ENCODE measurements at regions of chr3 and their contacts with region 1.

Region 1: DNA sequence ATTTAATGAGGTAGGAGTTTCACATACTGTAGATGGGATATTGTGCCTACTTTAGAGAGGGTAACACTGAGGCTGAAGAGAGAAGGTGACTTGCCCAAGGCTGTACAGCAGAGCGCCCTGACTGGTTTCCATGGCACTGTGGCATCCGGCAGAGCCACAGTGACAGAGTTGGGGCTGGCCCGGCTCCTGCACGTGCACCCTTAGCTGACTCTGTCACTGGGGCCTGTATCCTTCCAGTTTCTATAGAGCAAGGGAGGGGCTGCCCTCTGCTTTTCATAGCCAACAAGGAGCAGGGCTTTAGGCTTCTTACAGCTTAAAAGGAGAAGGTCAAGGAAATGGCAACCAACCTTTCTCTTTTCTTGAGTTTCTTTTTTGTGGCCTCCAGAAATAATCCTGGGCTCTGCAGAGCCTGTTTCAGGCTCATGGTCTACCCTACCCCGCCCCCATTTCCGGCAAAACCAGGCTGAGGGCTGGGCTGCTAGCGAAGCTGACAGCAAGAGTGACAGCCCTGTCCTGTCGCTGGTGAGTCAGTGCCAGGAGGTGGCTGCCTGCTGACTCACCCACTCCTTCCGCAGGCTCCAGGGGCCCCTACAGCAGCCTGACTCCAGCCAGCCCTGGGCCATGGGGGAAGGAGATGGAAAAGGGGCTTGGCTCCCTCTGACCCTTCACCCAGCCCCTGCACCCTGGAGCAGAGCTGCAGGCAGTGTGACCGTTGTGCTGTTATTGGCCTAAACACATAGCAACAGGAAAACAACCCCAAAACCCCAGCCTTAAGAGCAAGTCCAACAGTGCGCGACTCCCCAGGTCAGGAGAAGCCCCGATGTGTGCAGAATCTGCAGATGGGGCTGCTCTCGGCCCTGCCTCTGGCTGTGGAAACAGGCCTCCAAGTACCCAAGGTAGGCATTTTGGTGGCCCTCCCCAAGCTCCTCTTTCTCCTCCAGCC is 29.8 kb downstream of the SLC6A6 start:
- DNase-seq: peak; percentile 89 to 94
- ATAC-seq: peak; percentile 71 to 83 (median 78)
- H3K4me3 ChIP-seq: no peak overlapping the region
- H3K27ac ChIP-seq: peak overlapping the region; percentile 86
- H3K4me1 ChIP-seq: peaks cover 84% of the 10 kb centered on the region
- H3K27me3 ChIP-seq: no peaks in the 10 kb centered on the region
- CTCF ChIP-seq: no peak

Region 2: GRCh38 chr3:13544293-13544831 is 887.8 kb before region 1 on chr3:
- intact Hi-C with region 1: no loop called
- DNase-seq: peak; percentile 43 to 55
- ATAC-seq: peak in 1 of 4 donors; percentile 15
- H3K4me3 ChIP-seq: no peak overlapping the region
- H3K27ac ChIP-seq: peak overlapping the region; percentile 16
- H3K4me1 ChIP-seq: no peaks in the 10 kb centered on the region
- H3K27me3 ChIP-seq: peaks cover 0 to 22% (median 4%) of the 10 kb centered on the region in 3 donors
- CTCF ChIP-seq: no peak

Region 3: DNA sequence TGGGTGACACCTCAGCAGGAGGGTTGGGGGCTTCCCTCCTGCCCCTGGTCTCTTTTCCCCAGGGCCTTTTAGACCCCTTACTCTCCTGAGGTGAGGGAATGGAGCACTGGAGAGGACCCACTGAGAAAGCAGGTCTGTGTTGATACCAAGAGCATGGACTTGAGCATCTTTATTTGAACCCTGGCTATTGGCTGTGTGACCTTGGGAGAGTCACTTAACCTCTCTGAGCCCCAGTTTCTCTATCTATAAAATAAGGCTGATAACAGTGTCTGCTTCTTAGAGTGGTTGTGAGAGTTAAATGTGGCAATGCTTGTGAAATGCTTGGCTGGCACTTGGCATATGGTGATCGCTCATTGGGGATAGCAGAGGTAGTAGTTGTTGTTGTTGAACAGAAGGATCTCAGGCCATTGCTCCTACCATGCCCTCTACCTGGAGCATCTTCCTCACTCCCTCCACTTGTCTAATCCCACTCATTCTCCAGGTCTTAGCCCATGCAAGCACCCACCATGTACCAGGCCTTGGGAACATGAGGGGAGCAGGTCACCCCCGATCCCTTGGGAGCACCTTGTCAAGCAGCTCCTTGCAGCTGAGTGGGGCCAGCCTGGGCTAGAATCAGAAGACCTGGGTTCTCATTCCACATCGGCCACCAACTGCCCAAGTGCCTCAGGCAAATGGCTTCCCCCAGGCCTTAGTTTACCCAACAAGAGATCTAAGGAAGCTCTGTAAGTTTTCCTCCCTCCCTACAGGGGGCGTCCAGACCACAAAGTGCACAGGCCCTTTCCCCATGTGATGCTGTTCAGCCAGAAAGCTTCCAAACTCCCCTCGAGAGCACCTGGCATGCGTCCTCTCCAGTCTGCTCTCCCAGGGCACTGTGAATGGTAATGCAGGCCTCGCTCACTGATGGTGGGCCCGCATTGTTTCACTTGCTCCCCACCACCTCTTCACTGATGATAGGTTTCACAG is 156.9 kb before region 1 on chr3:
- intact Hi-C with region 1: no loop called
- DNase-seq: no peak
- ATAC-seq: peak in 3 of 4 donors; percentile 46 to 60 (median 50)
- H3K4me3 ChIP-seq: no peak overlapping the region
- H3K27ac ChIP-seq: no peak overlapping the region
- H3K4me1 ChIP-seq: no peaks in the 10 kb centered on the region
- H3K27me3 ChIP-seq: peaks cover 0 to 2% (median 0%) of the 10 kb centered on the region in 3 donors
- CTCF ChIP-seq: no peak

Region 4: GRCh38 chr3:14319654-14320182 is 112.4 kb before region 1 on chr3:
- intact Hi-C with region 1: loop called in 1 of 2 experiments (anchors 2 kb)
- DNase-seq: no peak
- ATAC-seq: peak in 2 of 4 donors; percentile 19 to 22
- H3K4me3 ChIP-seq: no peak overlapping the region
- H3K27ac ChIP-seq: peak overlapping the region; percentile 97
- H3K4me1 ChIP-seq: peaks cover 23% of the 10 kb centered on the region
- H3K27me3 ChIP-seq: no peaks in the 10 kb centered on the region
- CTCF ChIP-seq: no peak

Region 5: GRCh38 chr3:14371573-14372474 is 60.3 kb before region 1 on chr3:
- intact Hi-C with region 1: loop called in 1 of 2 experiments (anchors 2 kb)
- DNase-seq: peak; percentile 89 to 95
- ATAC-seq: peak; percentile 75 to 88 (median 84)
- H3K4me3 ChIP-seq: no peak overlapping the region
- H3K27ac ChIP-seq: peak overlapping the region; percentile 95
- H3K4me1 ChIP-seq: peaks cover 62% of the 10 kb centered on the region
- H3K27me3 ChIP-seq: no peaks in the 10 kb centered on the region
- CTCF ChIP-seq: no peak

Region 6: GRCh38 chr3:14402304-14402811 is 29.8 kb before region 1 on chr3 and contains the start of gene SLC6A6:
- intact Hi-C with region 1: loop called in 1 of 2 experiments (anchors 2 kb)
- DNase-seq: peak; percentile 96 to 97
- ATAC-seq: peak; percentile 78 to 81 (median 80)
- H3K4me3 ChIP-seq: peak within 1 kb of the TSS; percentile 91
- H3K27ac ChIP-seq: peak within 1 kb of the TSS; percentile 97
- H3K4me1 ChIP-seq: peaks cover 23% of the 10 kb centered on the region
- H3K27me3 ChIP-seq: no peaks in the 10 kb centered on the region
- CTCF ChIP-seq: peak; percentile 43
- total RNA-seq, gene SLC6A6: 10.3 to 104 (median 34.7) TPM

Region 7: DNA sequence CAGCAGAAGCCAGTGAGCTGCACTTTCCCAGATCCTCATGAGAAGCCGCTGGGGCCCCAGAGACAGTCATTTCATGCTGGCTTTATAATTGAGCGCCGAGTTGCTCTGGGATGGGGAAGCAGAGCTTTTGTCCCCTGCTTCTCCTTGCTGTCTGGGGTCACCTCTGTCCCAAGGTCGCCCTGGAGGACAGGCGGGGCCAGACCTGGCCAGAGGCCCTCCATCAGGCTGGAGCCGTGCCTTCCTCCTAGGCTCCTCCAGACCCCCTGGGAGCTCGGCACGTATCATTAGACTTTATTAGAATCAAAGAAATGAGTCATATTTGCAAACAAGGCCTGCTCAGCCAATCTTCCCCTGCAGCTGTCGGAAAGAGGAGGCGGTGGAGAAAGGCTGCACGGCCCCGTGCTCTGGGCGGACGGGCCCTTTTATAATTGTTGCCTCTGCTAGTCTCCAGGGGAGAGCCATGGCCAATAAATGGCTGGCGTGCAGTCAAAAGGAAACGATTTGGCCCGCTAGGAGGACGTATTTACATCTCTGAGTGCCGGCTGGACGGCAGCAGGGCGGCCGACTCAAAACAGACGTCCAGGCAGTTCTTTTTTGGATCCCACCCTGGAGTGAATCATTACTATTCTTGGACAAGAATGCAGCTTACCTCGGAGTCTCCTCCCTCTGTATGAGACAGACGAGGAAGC is 20.7 kb after region 1 on chr3:
- intact Hi-C with region 1: loop called in 1 of 2 experiments (anchors 2 kb)
- DNase-seq: peak; percentile 90 to 95
- ATAC-seq: peak; percentile 78 to 81 (median 80)
- H3K4me3 ChIP-seq: no peak overlapping the region
- H3K27ac ChIP-seq: peak overlapping the region; percentile 91
- H3K4me1 ChIP-seq: peaks cover 45% of the 10 kb centered on the region
- H3K27me3 ChIP-seq: no peaks in the 10 kb centered on the region
- CTCF ChIP-seq: peak; percentile 20